Naive thymus-derived CD4-positive, alpha-beta T cell (primary cell): ENCODE measurements at regions of chr12 and their contacts with region 1.

Region 1: GRCh38 chr12:50167041-50167828 is at the start of gene CERS5:
- DNase-seq: peak; percentile 87 to 98 (median 93)
- ATAC-seq: peak; percentile 99
- H3K4me3 ChIP-seq: peak within 1 kb of the TSS; percentile 69
- H3K4me3 Mint-ChIP-seq: peak within 1 kb of the TSS; percentile 82 to 98 (median 93)
- H3K27ac ChIP-seq: peak within 1 kb of the TSS; percentile 93
- H3K27ac Mint-ChIP-seq: peak within 1 kb of the TSS; percentile 84 to 98 (median 93)
- H3K4me1 ChIP-seq: peaks cover 11 to 13% of the 10 kb centered on the region in 2 donors
- H3K4me1 Mint-ChIP-seq: peaks cover 16 to 36% (median 30%) of the 10 kb centered on the region in 7 donors
- H3K27me3 ChIP-seq: no peaks in the 10 kb centered on the region
- H3K27me3 Mint-ChIP-seq: no peaks in the 10 kb centered on the region
- total RNA-seq, gene CERS5: 41.0 to 52.2 (median 47.7) TPM

Region 2: DNA sequence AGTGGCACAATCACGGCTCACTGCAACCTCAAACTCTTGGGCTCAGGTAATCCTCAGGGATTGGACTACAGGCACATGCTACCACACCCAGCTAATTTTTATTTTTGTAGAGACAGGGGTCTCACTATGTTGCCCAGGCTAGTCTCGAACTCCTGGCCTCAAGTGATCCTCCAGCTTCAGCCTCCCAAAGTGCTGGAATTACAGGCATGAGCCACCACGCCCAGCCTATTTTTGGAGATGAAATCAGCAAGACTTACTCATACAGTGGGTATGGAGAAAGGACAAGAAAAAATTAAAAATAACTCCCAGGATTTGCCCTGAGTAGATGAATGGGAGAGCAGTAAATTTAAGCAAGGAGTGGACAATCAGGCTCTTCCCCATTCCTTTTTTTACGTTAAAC is 473.2 kb before region 1 on chr12:
- CTCF ChIA-PET with region 1: no interaction called
- POLR2A ChIA-PET with region 1: no interaction called
- intact Hi-C with region 1: no loop called
- DNase-seq: no peak
- ATAC-seq: no peak
- H3K4me3 ChIP-seq: no peak overlapping the region
- H3K4me3 Mint-ChIP-seq: no peak overlapping the region
- H3K27ac ChIP-seq: no peak overlapping the region
- H3K27ac Mint-ChIP-seq: no peak overlapping the region
- H3K4me1 ChIP-seq: peaks cover 5 to 21% of the 10 kb centered on the region in 2 donors
- H3K4me1 Mint-ChIP-seq: peaks cover 31 to 71% (median 64%) of the 10 kb centered on the region in 7 donors
- H3K27me3 ChIP-seq: no peaks in the 10 kb centered on the region
- H3K27me3 Mint-ChIP-seq: no peaks in the 10 kb centered on the region

Region 3: DNA sequence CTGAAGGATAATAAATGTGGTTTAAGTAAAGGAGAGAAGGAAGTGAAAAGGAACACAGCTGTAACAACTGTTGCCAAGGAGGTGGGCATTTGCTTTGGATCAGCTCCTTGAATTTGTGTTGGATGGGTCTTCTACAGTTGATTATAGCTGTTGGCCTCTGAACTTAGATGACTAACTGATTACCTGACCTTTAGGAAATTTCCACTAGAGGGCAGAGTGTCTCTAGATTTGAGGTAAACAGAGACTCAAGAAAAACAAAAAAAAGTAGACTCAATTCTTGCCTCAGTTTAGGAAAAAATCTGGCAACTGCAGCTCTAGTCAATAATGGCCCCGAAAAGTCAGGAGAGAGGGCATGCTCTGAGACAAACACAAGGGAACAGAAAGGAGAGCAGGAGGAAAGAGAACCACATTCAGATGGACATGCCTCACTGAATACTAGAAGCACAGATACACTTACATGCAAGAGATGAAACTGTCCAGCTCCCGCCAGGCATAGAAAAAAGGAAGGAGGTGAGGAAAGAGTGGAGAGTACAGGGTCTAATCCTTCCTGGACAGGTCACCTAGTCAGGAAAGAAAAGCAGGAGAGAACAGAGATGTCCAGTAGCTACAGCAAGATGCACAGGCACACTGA is 34.6 kb before region 1 on chr12:
- CTCF ChIA-PET with region 1: interaction called, 4 read pairs
- POLR2A ChIA-PET with region 1: interaction called, 4 read pairs
- intact Hi-C with region 1: loop called (anchors 2 kb)
- DNase-seq: peak in 7 of 9 donors; percentile 29 to 62 (median 49)
- ATAC-seq: peak; percentile 61
- H3K4me3 ChIP-seq: no peak overlapping the region
- H3K4me3 Mint-ChIP-seq: no peak overlapping the region
- H3K27ac ChIP-seq: no peak overlapping the region
- H3K27ac Mint-ChIP-seq: peak overlapping the region in 8 of 9 donors; percentile 2 to 79 (median 36)
- H3K4me1 ChIP-seq: no peaks in the 10 kb centered on the region
- H3K4me1 Mint-ChIP-seq: peaks cover 9 to 19% (median 14%) of the 10 kb centered on the region in 7 donors
- H3K27me3 ChIP-seq: no peaks in the 10 kb centered on the region
- H3K27me3 Mint-ChIP-seq: no peaks in the 10 kb centered on the region

Region 4: DNA sequence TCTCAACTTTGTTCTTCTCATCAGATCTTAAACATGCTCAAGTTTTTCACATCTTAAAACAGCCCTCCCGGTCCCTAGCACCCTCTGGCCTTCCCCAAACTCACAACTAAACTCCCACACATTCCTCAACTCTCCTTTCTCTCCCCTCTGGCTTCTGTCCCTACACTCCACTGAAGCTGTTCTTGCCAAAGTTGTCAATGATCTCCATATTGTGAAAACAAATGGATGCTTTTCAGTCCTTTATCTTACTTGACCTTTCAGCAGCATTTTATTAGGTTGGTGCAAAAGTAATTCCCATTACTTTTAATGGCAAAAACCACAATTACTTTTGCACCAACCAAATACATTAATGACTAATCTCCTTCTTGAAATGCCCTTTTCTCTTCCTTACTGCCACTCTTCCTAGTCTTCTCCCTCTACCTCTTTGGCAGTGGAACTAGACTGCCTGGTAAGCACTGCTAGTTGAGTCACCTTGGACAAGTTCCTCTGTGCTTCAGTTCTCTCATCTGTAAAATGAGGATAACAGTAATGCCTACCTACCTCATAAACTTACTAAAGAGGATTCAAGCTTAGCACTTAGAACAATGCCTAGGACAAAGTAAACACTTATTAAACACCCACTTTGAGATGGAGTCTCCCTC is 16.1 kb before region 1 on chr12:
- CTCF ChIA-PET with region 1: interaction called, 4 read pairs
- POLR2A ChIA-PET with region 1: interaction called, 12 read pairs
- intact Hi-C with region 1: loop called in 1 of 2 experiments (anchors 2 kb)
- DNase-seq: no peak
- ATAC-seq: no peak
- H3K4me3 ChIP-seq: no peak overlapping the region
- H3K4me3 Mint-ChIP-seq: no peak overlapping the region
- H3K27ac ChIP-seq: no peak overlapping the region
- H3K27ac Mint-ChIP-seq: peak overlapping the region in 7 of 9 donors; percentile 2 to 60 (median 14)
- H3K4me1 ChIP-seq: no peaks in the 10 kb centered on the region
- H3K4me1 Mint-ChIP-seq: peaks cover 3 to 26% (median 18%) of the 10 kb centered on the region in 7 donors
- H3K27me3 ChIP-seq: no peaks in the 10 kb centered on the region
- H3K27me3 Mint-ChIP-seq: no peaks in the 10 kb centered on the region

Region 5: GRCh38 chr12:50283229-50283923 is 116.1 kb after region 1 on chr12 and contains the start of gene LIMA1:
- CTCF ChIA-PET with region 1: no interaction called
- POLR2A ChIA-PET with region 1: interaction called, 4 read pairs
- intact Hi-C with region 1: loop called in 1 of 2 experiments (anchors 1 kb)
- DNase-seq: peak; percentile 91 to 97 (median 94)
- ATAC-seq: peak; percentile 100
- H3K4me3 ChIP-seq: peak within 1 kb of the TSS; percentile 80
- H3K4me3 Mint-ChIP-seq: peak within 1 kb of the TSS; percentile 87 to 98 (median 94)
- H3K27ac ChIP-seq: peak within 1 kb of the TSS; percentile 90
- H3K27ac Mint-ChIP-seq: peak within 1 kb of the TSS; percentile 80 to 95 (median 88)
- H3K4me1 ChIP-seq: peaks cover 11 to 15% of the 10 kb centered on the region in 2 donors
- H3K4me1 Mint-ChIP-seq: peaks cover 8 to 32% (median 23%) of the 10 kb centered on the region in 7 donors
- H3K27me3 ChIP-seq: no peaks in the 10 kb centered on the region
- H3K27me3 Mint-ChIP-seq: peaks cover 0 to 27% (median 0%) of the 10 kb centered on the region in 5 donors
- total RNA-seq, gene LIMA1: 9.8 to 33.6 (median 11.2) TPM

Region 6: DNA sequence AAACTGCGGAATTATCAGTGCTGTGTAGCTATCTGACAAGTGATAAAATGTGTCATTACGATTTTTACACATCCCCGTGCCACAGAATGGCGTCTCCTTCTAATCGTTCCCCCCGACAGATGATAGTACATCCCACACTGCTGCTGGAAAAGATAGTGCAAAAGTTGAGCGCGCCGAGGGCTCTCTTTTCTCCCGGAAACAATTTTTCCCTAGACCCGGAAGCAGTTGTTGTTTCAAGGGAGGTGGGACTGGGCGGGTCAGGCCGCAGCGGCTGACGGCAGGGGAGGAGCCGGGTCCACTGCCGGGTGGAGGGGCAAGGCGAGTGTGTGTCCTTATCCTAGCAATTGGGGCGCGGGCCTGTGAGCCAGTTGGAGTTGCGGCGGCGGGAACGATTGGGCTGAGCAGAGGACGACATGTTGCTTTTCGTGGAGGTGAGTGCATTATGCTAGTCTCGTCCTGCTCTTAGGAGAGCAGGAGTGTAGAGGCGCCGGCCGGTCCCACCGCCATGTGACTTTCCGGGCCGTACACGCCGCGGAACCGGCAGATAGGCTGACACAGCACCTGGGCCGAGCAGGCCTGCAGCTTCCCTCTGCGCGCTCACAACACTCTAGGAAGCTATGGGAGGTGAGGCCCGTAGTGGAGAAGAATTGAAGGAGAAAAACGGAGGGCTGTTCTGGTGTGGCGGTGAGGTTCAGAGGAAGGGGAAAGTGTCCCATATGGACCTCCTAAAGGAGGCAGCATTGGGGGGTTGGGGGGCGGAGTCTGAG is 233.5 kb after region 1 on chr12 and contains the start of gene LARP4:
- CTCF ChIA-PET with region 1: no interaction called
- POLR2A ChIA-PET with region 1: no interaction called
- intact Hi-C with region 1: loop called (anchors 1 kb)
- DNase-seq: peak; percentile 70 to 92 (median 88)
- ATAC-seq: peak; percentile 98
- H3K4me3 ChIP-seq: peak within 1 kb of the TSS; percentile 66
- H3K4me3 Mint-ChIP-seq: peak within 1 kb of the TSS; percentile 81 to 100 (median 99)
- H3K27ac ChIP-seq: peak within 1 kb of the TSS; percentile 77
- H3K27ac Mint-ChIP-seq: peak within 1 kb of the TSS; percentile 86 to 97 (median 95)
- H3K4me1 ChIP-seq: peaks cover 9 to 12% of the 10 kb centered on the region in 2 donors
- H3K4me1 Mint-ChIP-seq: peaks cover 23 to 55% (median 37%) of the 10 kb centered on the region in 7 donors
- H3K27me3 ChIP-seq: no peaks in the 10 kb centered on the region
- H3K27me3 Mint-ChIP-seq: peaks cover 0 to 13% (median 6%) of the 10 kb centered on the region in 5 donors
- total RNA-seq, gene LARP4: 22.1 to 68.9 (median 38.4) TPM